ENCODE measurements at regions of chr4 and their contacts with region 1.

Region 1: DNA sequence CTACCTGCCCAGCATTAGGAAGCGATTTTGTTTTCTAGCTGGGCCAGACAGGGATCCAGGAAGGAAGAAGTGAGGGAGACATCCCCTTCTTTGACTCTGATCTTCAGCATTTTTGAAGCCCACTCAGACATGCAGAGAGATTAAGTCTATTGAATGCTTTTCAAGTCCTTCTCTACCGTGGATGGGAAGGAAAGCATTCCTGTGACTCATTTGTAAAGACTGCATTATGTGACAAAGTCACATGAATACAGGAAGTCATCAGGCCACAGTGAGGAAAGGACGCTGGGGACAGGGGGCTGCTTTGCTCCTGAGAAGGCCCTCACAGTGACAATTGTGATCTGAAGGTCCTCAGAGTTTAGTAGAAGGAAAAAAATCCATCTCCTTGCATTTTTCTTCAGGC is 67.4 kb upstream of the GBA3 start:
- DNase-seq: no peak
- H3K4me3 ChIP-seq: no peak overlapping the region
- H3K27ac ChIP-seq: no peak overlapping the region
- H3K4me1 ChIP-seq: no peaks in the 10 kb centered on the region
- H3K27me3 ChIP-seq: no peaks in the 10 kb centered on the region
- CTCF ChIP-seq: no peak
- POLR2A ChIP-seq: no peak

Region 2: GRCh38 chr4:21363701-21364100 is 1261.6 kb before region 1 on chr4:
- intact Hi-C with region 1: loop called (anchors 5 kb)
- DNase-seq: no peak
- H3K4me3 ChIP-seq: no peak overlapping the region
- H3K27ac ChIP-seq: no peak overlapping the region
- H3K4me1 ChIP-seq: no peaks in the 10 kb centered on the region
- H3K27me3 ChIP-seq: no peaks in the 10 kb centered on the region
- CTCF ChIP-seq: no peak
- POLR2A ChIP-seq: no peak

Region 3: GRCh38 chr4:21937689-21938088 is 687.6 kb before region 1 on chr4:
- intact Hi-C with region 1: no loop called
- DNase-seq: no peak
- H3K4me3 ChIP-seq: no peak overlapping the region
- H3K27ac ChIP-seq: no peak overlapping the region
- H3K4me1 ChIP-seq: no peaks in the 10 kb centered on the region
- H3K27me3 ChIP-seq: no peaks in the 10 kb centered on the region
- CTCF ChIP-seq: no peak
- POLR2A ChIP-seq: no peak

Region 4: DNA sequence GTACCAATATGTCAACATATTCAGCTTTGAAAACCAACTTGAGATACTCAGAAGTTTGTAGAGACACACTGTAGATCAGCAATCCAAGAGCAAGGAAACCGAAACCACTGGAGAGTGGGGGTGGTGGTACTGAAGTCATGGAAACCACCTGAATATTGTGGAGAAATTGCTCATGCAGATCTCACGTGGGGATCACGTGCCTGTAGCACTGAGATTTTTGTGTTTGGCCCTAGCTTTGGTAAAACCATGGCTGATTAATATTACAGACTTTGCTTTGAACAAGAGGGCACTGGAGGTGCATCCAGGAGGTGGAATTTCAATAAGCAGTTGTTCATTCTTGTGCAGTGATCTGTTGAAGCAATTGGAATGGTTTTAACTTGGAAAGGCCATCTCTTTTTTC is 114.7 kb after region 1 on chr4:
- intact Hi-C with region 1: no loop called
- DNase-seq: no peak
- H3K4me3 ChIP-seq: no peak overlapping the region
- H3K27ac ChIP-seq: no peak overlapping the region
- H3K4me1 ChIP-seq: no peaks in the 10 kb centered on the region
- H3K27me3 ChIP-seq: no peaks in the 10 kb centered on the region
- CTCF ChIP-seq: no peak
- POLR2A ChIP-seq: no peak

Region 5: DNA sequence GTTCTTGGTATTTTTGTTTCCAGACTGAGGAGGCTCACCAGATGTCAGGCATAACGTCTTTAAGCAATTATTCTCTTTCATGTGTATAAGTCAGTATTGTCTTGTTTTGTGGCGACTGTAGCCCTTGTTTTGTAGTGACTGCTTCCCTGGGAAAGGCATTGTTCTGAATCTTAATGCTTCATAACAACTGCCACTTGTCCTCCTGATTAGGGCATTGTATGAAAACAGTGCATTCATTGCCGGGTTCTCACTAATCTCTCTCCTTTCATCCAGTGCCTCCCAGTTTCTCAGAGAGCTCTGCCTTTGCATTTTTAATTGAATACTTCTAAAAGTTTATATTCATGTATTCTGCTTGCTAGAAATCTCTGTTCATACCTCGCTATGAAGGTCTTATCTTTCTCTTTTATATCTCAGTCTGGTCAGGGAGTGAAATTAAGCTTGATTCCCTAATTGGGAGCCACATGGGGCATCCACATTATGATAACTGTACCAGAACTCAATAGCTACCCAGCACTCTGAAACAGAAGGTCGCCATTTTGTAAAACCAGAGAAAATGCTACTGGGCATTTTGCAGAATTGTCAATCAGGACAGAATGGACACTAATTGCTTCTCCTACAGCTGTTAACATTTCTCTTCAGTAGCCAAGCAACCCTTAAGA is 217.2 kb after region 1 on chr4:
- intact Hi-C with region 1: no loop called
- DNase-seq: no peak
- H3K4me3 ChIP-seq: no peak overlapping the region
- H3K27ac ChIP-seq: no peak overlapping the region
- H3K4me1 ChIP-seq: no peaks in the 10 kb centered on the region
- H3K27me3 ChIP-seq: no peaks in the 10 kb centered on the region
- CTCF ChIP-seq: no peak
- POLR2A ChIP-seq: no peak

Region 6: DNA sequence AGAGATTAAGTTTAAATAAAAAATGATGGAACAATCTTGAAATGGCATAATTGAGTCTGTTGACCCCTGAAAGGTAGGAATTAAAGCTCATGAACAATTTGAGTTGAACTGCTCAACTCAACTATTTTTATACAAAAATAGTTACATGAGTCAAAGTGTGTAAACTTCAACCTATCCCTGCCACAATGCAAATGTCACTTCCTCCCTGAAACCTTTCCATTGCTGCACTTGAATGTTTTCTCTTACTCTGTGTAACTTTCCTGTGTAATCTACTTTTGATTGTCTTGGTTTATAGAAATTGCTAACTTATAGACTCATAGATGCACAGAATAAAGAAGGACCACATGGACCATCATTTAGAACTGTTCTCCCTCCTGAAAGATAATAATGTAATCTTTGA is 286.0 kb after region 1 on chr4:
- intact Hi-C with region 1: no loop called
- DNase-seq: no peak
- H3K4me3 ChIP-seq: no peak overlapping the region
- H3K27ac ChIP-seq: no peak overlapping the region
- H3K4me1 ChIP-seq: no peaks in the 10 kb centered on the region
- H3K27me3 ChIP-seq: no peaks in the 10 kb centered on the region
- CTCF ChIP-seq: no peak
- POLR2A ChIP-seq: no peak

Measured in vagina (tissue), 2 donors.